ENCODE measurements at regions of chr9 and their contacts with region 1.

Region 1: DNA sequence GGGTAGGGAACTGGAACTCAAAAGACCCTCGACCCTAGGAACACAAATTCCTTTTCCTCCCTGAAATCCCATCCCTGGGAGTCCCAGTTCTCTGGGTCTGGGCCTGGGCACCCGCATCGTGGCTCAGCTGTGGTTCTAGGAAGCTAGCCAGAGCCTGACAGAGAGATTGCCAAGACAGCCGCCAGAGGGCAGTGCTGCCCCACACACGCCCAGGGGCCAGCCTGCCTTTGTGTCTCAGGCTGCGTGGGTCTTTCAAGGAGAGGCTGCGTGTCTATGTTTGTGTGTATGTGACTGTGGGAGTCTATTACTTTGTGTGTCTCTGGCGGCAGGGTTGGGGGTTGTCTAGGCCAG is 32.0 kb upstream of the TTLL11 start:
- DNase-seq: peak; percentile 82 to 88
- ATAC-seq: peak; percentile 82 to 93 (median 88)
- H3K4me3 ChIP-seq: no peak overlapping the region
- H3K27ac ChIP-seq: no peak overlapping the region
- H3K4me1 ChIP-seq: peaks cover 6% of the 10 kb centered on the region
- H3K27me3 ChIP-seq: peaks cover 0 to 13% (median 0%) of the 10 kb centered on the region in 3 donors
- CTCF ChIP-seq: peak; percentile 96

Region 2: DNA sequence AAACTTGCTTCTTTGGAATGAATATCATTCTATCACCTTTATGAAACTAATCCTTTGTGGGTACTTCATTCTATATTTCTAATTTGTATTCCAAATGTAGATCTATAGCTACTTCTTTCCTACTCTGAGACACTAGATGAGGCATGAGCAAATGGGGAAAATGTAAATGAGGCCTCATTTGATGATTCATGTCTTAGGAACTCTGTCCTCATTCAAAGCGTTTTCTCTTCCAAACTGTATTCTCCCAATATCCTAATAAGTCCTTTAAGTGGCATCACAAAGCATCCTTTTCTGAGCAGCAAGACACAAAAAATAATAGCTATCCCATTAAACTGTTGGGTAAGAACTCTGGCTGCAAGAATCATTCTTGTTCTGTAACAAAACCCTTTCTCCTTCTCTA is 88.1 kb before region 1 on chr9:
- intact Hi-C with region 1: no loop called
- DNase-seq: no peak
- ATAC-seq: no peak
- H3K4me3 ChIP-seq: no peak overlapping the region
- H3K27ac ChIP-seq: peak overlapping the region; percentile 17
- H3K4me1 ChIP-seq: peaks cover 57% of the 10 kb centered on the region
- H3K27me3 ChIP-seq: no peaks in the 10 kb centered on the region
- CTCF ChIP-seq: no peak

Region 3: GRCh38 chr9:122099271-122099869 is 25.8 kb before region 1 on chr9:
- intact Hi-C with region 1: loop called (anchors 1 kb)
- DNase-seq: peak; percentile 85 to 92
- ATAC-seq: peak; percentile 83 to 94 (median 86)
- H3K4me3 ChIP-seq: peak overlapping the region; percentile 39
- H3K27ac ChIP-seq: no peak overlapping the region
- H3K4me1 ChIP-seq: peaks cover 9% of the 10 kb centered on the region
- H3K27me3 ChIP-seq: no peaks in the 10 kb centered on the region
- CTCF ChIP-seq: peak; percentile 84

Region 4: GRCh38 chr9:122219856-122220672 is 94.9 kb after region 1 on chr9:
- intact Hi-C with region 1: loop called in 1 of 2 experiments (anchors 5 kb)
- DNase-seq: no peak
- ATAC-seq: peak; percentile 17 to 65 (median 44)
- H3K4me3 ChIP-seq: peak overlapping the region; percentile 51
- H3K27ac ChIP-seq: no peak overlapping the region
- H3K4me1 ChIP-seq: peaks cover 14% of the 10 kb centered on the region
- H3K27me3 ChIP-seq: peaks cover 0 to 91% (median 29%) of the 10 kb centered on the region in 3 donors
- CTCF ChIP-seq: no peak

Region 5: DNA sequence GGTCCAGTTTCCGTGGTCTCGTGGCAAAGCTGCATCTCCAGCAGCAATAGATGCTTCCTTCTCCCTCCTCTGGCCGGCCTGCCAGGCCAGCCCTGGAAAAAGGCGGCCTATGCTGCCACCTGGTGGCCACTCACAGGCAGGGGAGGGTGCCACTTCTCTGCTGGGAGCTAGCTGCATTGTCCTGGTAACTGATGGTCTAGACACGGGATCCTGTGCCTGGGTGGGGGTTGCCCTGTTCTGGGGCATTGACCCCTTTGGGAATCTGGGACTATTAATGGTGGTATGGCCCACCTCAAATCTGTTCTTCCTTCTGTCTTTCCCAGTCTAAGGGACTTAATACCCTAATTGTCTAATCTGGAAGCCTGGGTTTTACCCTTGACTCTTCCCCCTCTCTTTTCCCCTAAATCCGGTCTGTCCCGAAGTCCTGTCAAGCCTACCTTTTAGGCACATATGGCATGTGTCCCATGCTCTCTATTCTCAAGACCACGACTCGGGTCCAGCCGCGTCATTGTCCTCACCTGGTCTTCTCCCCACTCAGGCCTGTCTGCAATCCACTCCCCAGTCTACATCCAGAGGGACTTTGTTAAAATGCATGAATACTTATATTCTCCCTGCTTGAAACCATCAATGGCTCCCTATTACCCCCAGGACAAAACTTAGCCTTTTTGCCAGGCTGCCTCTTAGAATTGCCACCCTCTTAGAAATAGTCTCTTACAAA is 225.7 kb after region 1 on chr9:
- intact Hi-C with region 1: loop called (anchors 1 to 2 kb)
- DNase-seq: peak; percentile 78 to 91
- ATAC-seq: peak; percentile 87 to 94 (median 91)
- H3K4me3 ChIP-seq: no peak overlapping the region
- H3K27ac ChIP-seq: no peak overlapping the region
- H3K4me1 ChIP-seq: no peaks in the 10 kb centered on the region
- H3K27me3 ChIP-seq: no peaks in the 10 kb centered on the region
- CTCF ChIP-seq: peak; percentile 94

Region 6: DNA sequence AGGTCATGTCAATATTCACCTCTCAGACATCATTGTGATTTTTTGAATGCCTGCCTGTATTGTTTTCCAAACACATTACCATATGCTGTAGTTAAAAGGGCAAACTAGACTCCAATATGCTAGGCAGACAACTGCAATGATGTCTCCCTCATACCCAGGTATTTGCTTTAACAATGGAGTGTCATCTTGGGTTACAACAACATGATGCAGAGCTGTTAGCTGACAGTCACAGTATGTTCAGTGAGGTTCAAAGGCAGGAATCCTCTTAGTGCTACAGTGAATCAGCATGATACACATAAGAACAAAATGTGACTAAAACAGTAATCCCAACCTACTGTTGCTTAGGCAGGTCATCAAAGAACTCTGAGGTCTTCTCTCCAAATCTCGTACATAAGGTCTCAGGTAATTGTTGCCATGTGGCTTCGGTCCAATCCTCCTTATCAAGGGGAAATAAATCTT is 328.6 kb after region 1 on chr9:
- intact Hi-C with region 1: loop called in 1 of 2 experiments (anchors 10 kb)
- DNase-seq: no peak
- ATAC-seq: no peak
- H3K4me3 ChIP-seq: no peak overlapping the region
- H3K27ac ChIP-seq: no peak overlapping the region
- H3K4me1 ChIP-seq: no peaks in the 10 kb centered on the region
- H3K27me3 ChIP-seq: no peaks in the 10 kb centered on the region
- CTCF ChIP-seq: no peak

Region 7: GRCh38 chr9:122810306-122810946 is 685.3 kb after region 1 on chr9:
- intact Hi-C with region 1: loop called (anchors 10 kb)
- DNase-seq: peak; percentile 63 to 81
- ATAC-seq: peak; percentile 84 to 98 (median 90)
- H3K4me3 ChIP-seq: no peak overlapping the region
- H3K27ac ChIP-seq: no peak overlapping the region
- H3K4me1 ChIP-seq: no peaks in the 10 kb centered on the region
- H3K27me3 ChIP-seq: no peaks in the 10 kb centered on the region
- CTCF ChIP-seq: peak; percentile 80